Activated naive CD8-positive, alpha-beta T cell treated with anti-CD3 and anti-CD28 coated beads, Interleukin-2, amount 10 ng/mL, durations not matched to agents 7 days and 5 days (primary cell): ENCODE measurements at regions of chr13 and their contacts with region 1.

Region 1: DNA sequence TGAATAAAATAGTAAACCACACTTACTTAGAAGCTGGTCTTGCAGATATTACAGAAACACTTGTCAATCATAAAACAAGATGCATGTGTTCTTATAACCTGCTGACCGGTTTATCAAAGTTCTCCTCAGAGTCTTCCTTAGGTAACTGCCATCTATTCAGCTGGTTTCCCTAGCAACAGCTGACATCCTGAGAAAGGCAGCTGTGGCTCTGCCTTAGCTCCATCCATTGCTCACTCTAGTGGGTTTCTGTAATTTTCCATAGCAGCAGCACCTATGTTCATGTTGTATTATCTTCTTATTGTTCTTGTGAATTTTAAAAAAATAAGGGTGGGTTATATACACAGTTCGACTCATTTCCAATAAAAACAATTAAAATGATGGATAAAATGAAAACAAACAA is 87.8 kb downstream of the RAP2A start:
- DNase-seq: no peak
- ATAC-seq: no peak
- H3K4me3 Mint-ChIP-seq: no peak overlapping the region
- H3K27ac Mint-ChIP-seq: no peak overlapping the region
- H3K4me1 Mint-ChIP-seq: no peaks in the 10 kb centered on the region
- H3K27me3 Mint-ChIP-seq: no peaks in the 10 kb centered on the region

Region 2: DNA sequence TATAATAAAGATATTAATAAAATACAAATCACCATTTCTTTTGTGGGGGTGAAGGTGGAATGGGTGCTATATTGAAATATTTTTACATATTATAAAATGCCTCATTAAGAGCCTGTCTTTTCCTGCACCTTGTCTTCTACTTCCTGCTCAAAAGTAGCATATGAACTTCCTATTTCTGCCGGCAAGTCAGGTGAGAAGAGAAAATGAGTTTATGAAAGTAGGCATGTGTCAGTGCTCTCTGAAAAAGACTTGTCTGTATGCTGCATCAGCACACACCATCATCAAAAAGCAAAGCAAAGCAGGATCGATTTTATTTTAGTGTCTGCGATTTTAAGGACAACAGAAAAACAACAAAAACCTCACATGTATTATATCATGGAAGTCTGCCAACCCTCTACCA is 26.4 kb after region 1 on chr13:
- POLR2A ChIA-PET with region 1: no interaction called
- DNase-seq: no peak
- ATAC-seq: no peak
- H3K4me3 Mint-ChIP-seq: no peak overlapping the region
- H3K27ac Mint-ChIP-seq: no peak overlapping the region
- H3K4me1 Mint-ChIP-seq: peaks cover 7% of the 10 kb centered on the region
- H3K27me3 Mint-ChIP-seq: no peaks in the 10 kb centered on the region

Region 3: GRCh38 chr13:97570442-97570841 is 48.7 kb after region 1 on chr13:
- POLR2A ChIA-PET with region 1: interaction called, 14 read pairs
- DNase-seq: no peak
- ATAC-seq: no peak
- H3K4me3 Mint-ChIP-seq: no peak overlapping the region
- H3K27ac Mint-ChIP-seq: no peak overlapping the region
- H3K4me1 Mint-ChIP-seq: no peaks in the 10 kb centered on the region
- H3K27me3 Mint-ChIP-seq: peaks cover 13% of the 10 kb centered on the region